CD4-positive, alpha-beta memory T cell (primary cell): ENCODE measurements at regions of chr5 and their contacts with region 1.

Region 1: GRCh38 chr5:134738133-134738962 is at the start of gene CAMLG:
- DNase-seq: peak; percentile 96 to 97 (median 97)
- H3K4me3 ChIP-seq: peak within 1 kb of the TSS; percentile 87 to 97
- H3K4me3 Mint-ChIP-seq: peak within 1 kb of the TSS; percentile 88 to 98 (median 94)
- H3K27ac ChIP-seq: peak within 1 kb of the TSS; percentile 86
- H3K27ac Mint-ChIP-seq: peak within 1 kb of the TSS; percentile 85 to 99 (median 97)
- H3K4me1 ChIP-seq: peaks cover 18% of the 10 kb centered on the region
- H3K4me1 Mint-ChIP-seq: peaks cover 14 to 31% (median 21%) of the 10 kb centered on the region in 4 donors
- H3K27me3 ChIP-seq: no peaks in the 10 kb centered on the region
- H3K27me3 Mint-ChIP-seq: no peaks in the 10 kb centered on the region
- total RNA-seq, gene CAMLG: 26.7 to 33.8 TPM

Region 2: GRCh38 chr5:134304311-134304710 is 434.0 kb before region 1 on chr5:
- CTCF ChIA-PET with region 1: interaction called, 4 read pairs
- POLR2A ChIA-PET with region 1: no interaction called
- intact Hi-C with region 1: loop called (anchors 2 kb)
- DNase-seq: no peak
- H3K4me3 ChIP-seq: no peak overlapping the region
- H3K4me3 Mint-ChIP-seq: no peak overlapping the region
- H3K27ac ChIP-seq: no peak overlapping the region
- H3K27ac Mint-ChIP-seq: no peak overlapping the region
- H3K4me1 ChIP-seq: no peaks in the 10 kb centered on the region
- H3K4me1 Mint-ChIP-seq: no peaks in the 10 kb centered on the region
- H3K27me3 ChIP-seq: no peaks in the 10 kb centered on the region
- H3K27me3 Mint-ChIP-seq: no peaks in the 10 kb centered on the region

Region 3: GRCh38 chr5:134637161-134637582 is 101.2 kb before region 1 on chr5:
- CTCF ChIA-PET with region 1: no interaction called
- POLR2A ChIA-PET with region 1: no interaction called
- intact Hi-C with region 1: loop called (anchors 1 kb)
- DNase-seq: no peak
- H3K4me3 ChIP-seq: no peak overlapping the region
- H3K4me3 Mint-ChIP-seq: no peak overlapping the region
- H3K27ac ChIP-seq: no peak overlapping the region
- H3K27ac Mint-ChIP-seq: no peak overlapping the region
- H3K4me1 ChIP-seq: peaks cover 4% of the 10 kb centered on the region
- H3K4me1 Mint-ChIP-seq: peaks cover 0 to 13% (median under 1%) of the 10 kb centered on the region in 4 donors
- H3K27me3 ChIP-seq: no peaks in the 10 kb centered on the region
- H3K27me3 Mint-ChIP-seq: no peaks in the 10 kb centered on the region

Region 4: DNA sequence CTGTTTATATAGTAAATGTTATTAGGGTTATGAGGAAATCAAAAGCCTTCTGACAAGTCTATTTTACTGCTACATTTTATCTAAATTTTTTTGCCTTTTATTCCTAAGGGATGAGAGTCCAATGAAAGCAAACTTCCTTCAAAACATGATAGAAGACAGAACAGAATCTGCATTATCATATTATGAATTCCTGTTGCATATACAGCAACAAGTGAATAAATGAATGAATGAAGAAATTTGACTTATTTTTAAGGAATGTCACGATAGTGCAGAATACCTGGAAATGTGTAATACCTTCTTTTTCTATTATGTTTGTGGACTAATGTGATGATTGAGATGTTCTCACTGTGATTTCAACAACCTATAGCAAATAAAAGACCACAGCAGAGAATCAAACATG is 13.5 kb before region 1 on chr5:
- CTCF ChIA-PET with region 1: interaction called, 12 read pairs
- POLR2A ChIA-PET with region 1: interaction called, 3 read pairs
- intact Hi-C with region 1: no loop called
- DNase-seq: no peak
- H3K4me3 ChIP-seq: no peak overlapping the region
- H3K4me3 Mint-ChIP-seq: no peak overlapping the region
- H3K27ac ChIP-seq: no peak overlapping the region
- H3K27ac Mint-ChIP-seq: no peak overlapping the region
- H3K4me1 ChIP-seq: no peaks in the 10 kb centered on the region
- H3K4me1 Mint-ChIP-seq: no peaks in the 10 kb centered on the region
- H3K27me3 ChIP-seq: no peaks in the 10 kb centered on the region
- H3K27me3 Mint-ChIP-seq: no peaks in the 10 kb centered on the region

Region 5: DNA sequence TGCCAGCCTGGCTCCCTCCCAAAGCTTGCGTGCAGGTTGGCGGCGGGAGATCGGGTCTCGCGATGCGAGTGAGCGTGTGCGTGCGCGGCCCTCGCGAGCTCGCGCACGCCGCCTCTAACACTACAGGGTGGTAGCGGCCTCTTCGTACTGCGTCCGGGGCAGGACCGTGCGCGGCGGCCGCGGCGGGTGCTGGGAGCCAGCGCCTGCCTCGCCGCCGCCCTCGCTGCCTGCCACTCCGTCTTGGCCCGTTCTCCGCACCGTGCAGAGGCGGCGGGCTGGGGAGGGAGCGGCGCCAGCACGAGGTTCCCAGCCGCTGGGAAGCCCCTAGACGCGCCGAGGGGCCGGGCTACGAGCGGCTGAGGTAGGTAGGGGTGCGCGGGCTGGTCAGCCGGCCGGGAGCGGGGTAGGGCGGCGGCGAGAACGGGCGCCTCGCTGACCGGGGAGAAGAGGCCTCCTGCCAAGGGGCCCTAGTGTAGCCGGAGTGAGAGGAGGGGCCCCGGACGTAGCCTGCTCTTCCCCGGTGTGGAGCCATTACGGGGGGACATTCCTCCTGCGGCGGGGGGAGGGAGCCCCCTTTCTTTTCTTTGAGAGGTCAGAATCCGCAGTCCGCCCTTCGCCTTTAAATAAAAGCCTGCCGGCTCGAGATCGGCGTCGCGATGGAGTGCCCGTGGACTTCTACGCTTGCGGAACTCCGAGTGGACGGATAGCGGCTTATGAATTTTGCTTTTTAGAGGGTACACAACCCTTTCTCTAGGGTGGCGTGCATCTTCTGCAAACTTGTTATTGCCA is 107.7 kb after region 1 on chr5 and contains the start of gene C5orf24:
- CTCF ChIA-PET with region 1: interaction called, 12 read pairs
- POLR2A ChIA-PET with region 1: interaction called, 24 read pairs
- intact Hi-C with region 1: loop called (anchors 1 kb)
- DNase-seq: peak; percentile 90 to 93 (median 92)
- H3K4me3 ChIP-seq: peak within 1 kb of the TSS; percentile 59 to 92
- H3K4me3 Mint-ChIP-seq: peak within 1 kb of the TSS; percentile 87 to 96 (median 92)
- H3K27ac ChIP-seq: peak within 1 kb of the TSS; percentile 94
- H3K27ac Mint-ChIP-seq: peak within 1 kb of the TSS; percentile 93 to 99 (median 97)
- H3K4me1 ChIP-seq: peaks cover 29% of the 10 kb centered on the region
- H3K4me1 Mint-ChIP-seq: peaks cover 16 to 42% (median 29%) of the 10 kb centered on the region in 4 donors
- H3K27me3 ChIP-seq: no peaks in the 10 kb centered on the region
- H3K27me3 Mint-ChIP-seq: no peaks in the 10 kb centered on the region
- total RNA-seq, gene C5orf24: 33.4 to 33.9 TPM